ENCODE measurements at regions of chr4 and their contacts with region 1.

Region 1: DNA sequence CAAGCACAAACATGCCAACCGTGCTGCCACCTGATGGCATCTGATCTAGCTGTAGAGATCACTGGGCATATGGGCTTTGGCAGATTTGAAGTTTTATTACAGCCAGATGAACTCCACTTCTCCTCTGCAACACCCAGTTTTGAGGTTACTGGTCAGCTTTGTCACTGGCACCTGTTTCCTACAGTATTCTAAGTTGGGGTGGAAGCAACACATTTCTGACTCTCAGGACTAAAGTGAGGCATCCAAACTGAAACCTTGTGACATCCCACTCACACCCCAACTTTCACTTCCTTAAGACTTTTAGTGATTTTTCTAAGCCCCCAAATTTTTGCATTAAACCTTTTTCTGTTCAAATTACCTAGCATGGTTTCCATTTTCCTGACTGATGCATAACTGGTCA is 115.1 kb upstream of the PCDH18 start:
- DNase-seq: peak; percentile 9
- ATAC-seq: no peak
- H3K4me3 ChIP-seq: no peak overlapping the region
- H3K27ac ChIP-seq: peak overlapping the region; percentile 82
- H3K4me1 ChIP-seq: peaks cover 50% of the 10 kb centered on the region
- H3K27me3 ChIP-seq: no peaks in the 10 kb centered on the region
- CTCF ChIP-seq: no peak

Region 2: DNA sequence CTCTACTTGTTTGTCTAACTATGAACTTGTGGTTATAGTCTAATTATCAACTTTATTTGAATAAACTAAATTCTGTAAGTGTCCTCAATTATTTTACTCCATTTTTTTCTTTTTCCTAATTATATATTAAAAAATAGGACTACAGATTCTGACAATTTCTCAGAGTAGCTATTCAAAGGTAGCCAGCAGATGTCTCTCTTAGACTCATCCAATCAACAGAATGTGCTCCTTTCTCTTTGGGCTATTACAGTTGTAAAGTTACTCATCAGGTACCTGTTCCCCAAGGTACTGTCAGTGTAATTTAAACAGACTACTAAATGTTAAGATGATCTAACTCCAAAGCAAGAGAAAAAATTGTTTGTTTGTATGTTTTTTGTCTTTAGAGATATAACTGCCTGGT is 363.6 kb before region 1 on chr4:
- CTCF ChIA-PET with region 1: no interaction called
- POLR2A ChIA-PET with region 1: no interaction called
- intact Hi-C with region 1: loop called (anchors 5 kb)
- DNase-seq: peak; percentile 49
- ATAC-seq: peak; percentile 54; the same call in 1 of the 2 replicates
- H3K4me3 ChIP-seq: no peak overlapping the region
- H3K27ac ChIP-seq: no peak overlapping the region
- H3K4me1 ChIP-seq: no peaks in the 10 kb centered on the region
- H3K27me3 ChIP-seq: no peaks in the 10 kb centered on the region
- CTCF ChIP-seq: peak; percentile 50

Region 3: GRCh38 chr4:137992951-137993631 is 345.7 kb after region 1 on chr4:
- CTCF ChIA-PET with region 1: no interaction called
- POLR2A ChIA-PET with region 1: no interaction called
- intact Hi-C with region 1: loop called (anchors 1 kb)
- DNase-seq: peak; percentile 83
- ATAC-seq: peak; percentile 93
- H3K4me3 ChIP-seq: no peak overlapping the region
- H3K27ac ChIP-seq: peak overlapping the region; percentile 88
- H3K4me1 ChIP-seq: peaks cover 21% of the 10 kb centered on the region
- H3K27me3 ChIP-seq: no peaks in the 10 kb centered on the region
- CTCF ChIP-seq: peak; percentile 30

Measured in PC-3 (cell line).